ENCODE measurements at regions of chr19 and their contacts with region 1.

Region 1: GRCh38 chr19:11203194-11204075 is 6.1 kb upstream of the KANK2 start:
- DNase-seq: peak; percentile 88 to 96 (median 95)
- H3K4me3 ChIP-seq: no peak overlapping the region
- H3K27ac ChIP-seq: peak overlapping the region in 4 of 5 donors; percentile 76 to 93 (median 90)
- H3K4me1 ChIP-seq: peaks cover 20 to 40% of the 10 kb centered on the region in 2 donors
- H3K27me3 ChIP-seq: no peaks in the 10 kb centered on the region
- CTCF ChIP-seq: peak; percentile 79 to 91 (median 84)
- POLR2A ChIP-seq: peak in 1 of 2 donors; percentile 51

Region 2: GRCh38 chr19:11137542-11138384 is 65.7 kb before region 1 on chr19:
- intact Hi-C with region 1: loop called (anchors 2 to 5 kb)
- DNase-seq: peak; percentile 85 to 95 (median 89)
- H3K4me3 ChIP-seq: peak overlapping the region in 1 of 4 donors; percentile 42
- H3K27ac ChIP-seq: peak overlapping the region; percentile 37 to 97 (median 91)
- H3K4me1 ChIP-seq: peaks cover 36 to 41% of the 10 kb centered on the region in 2 donors
- H3K27me3 ChIP-seq: no peaks in the 10 kb centered on the region
- CTCF ChIP-seq: peak; percentile 46 to 95 (median 90)
- POLR2A ChIP-seq: no peak

Region 3: DNA sequence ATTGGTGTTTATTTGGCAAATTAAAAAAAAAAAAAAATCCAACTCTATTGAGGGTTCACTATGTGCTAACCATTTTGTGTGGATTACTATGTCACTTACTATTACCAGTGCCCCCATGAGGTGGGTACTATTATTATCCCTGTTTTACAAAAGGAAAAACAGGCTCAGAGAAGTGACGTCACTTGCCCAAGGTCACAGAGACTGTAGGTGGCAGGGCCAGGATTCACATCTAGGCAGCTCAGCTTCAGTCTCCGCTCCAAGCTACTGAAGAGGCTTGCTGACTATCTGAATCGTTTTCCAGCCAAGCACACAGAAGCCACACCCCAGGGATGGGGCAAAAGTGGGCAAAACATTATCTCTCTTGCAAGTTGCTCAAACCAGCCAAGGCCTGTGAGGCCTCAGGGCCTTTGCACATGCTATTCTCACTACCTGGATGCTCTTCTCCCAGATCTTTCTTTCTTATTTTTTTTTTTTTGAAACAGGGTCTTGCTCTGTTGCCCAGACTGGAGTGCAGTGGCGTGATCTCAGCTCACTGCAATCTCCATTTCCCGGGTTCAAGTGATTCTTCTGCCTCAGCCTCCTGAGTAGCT is 31.1 kb after region 1 on chr19:
- intact Hi-C with region 1: no loop called
- DNase-seq: peak; percentile 62 to 88 (median 81)
- H3K4me3 ChIP-seq: no peak overlapping the region
- H3K27ac ChIP-seq: peak overlapping the region in 3 of 5 donors; percentile 46 to 67 (median 64)
- H3K4me1 ChIP-seq: no peaks in the 10 kb centered on the region
- H3K27me3 ChIP-seq: no peaks in the 10 kb centered on the region
- CTCF ChIP-seq: peak in 3 of 6 experiments; percentile 2 to 17 (median 6)
- POLR2A ChIP-seq: peak in 1 of 2 donors; percentile 22